GM12878 (cell line): ENCODE measurements at regions of chr20 and their contacts with region 1.

Region 1: GRCh38 chr20:18632196-18633009 is 44.5 kb downstream of the DTD1 start:
- DNase-seq: no peak
- ATAC-seq: peak; percentile 100
- H3K4me3 ChIP-seq: no peak overlapping the region
- H3K27ac ChIP-seq: no peak overlapping the region
- H3K4me1 ChIP-seq: no peaks in the 10 kb centered on the region
- H3K27me3 ChIP-seq: no peaks in the 10 kb centered on the region
- CTCF ChIP-seq: peak; percentile 90 to 98 (median 95)
- EP300 ChIP-seq: no peak
- POLR2A ChIP-seq: no peak
- RAD21 ChIP-seq: peak; percentile 100

Region 2: DNA sequence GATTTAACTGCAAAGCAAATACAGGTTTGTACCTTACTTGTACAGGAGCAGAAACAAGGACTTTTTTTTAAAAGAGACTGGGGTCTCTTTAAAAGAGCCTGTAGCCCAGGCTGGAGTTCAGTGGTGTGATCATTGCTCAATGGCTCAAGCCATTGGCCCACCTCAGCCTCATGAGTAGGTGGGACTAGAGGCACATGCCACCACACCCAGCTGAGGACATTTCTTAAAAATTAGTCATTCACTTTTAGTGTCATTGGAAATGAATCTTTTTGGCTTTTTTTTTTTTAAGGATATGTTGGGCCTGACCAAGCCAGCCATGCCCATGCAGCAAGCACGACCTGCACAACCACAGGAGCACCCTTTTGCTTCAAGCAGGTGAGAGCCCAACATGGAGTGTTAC is 107.8 kb before region 1 on chr20:
- CTCF ChIA-PET with region 1: no interaction called
- POLR2A ChIA-PET with region 1: no interaction called
- RAD21 ChIA-PET with region 1: no interaction called
- SMC1A ChIA-PET with region 1: no interaction called
- in situ Hi-C with region 1: no loop called
- intact Hi-C with region 1: no loop called
- DNase-seq: no peak
- ATAC-seq: no peak
- H3K4me3 ChIP-seq: no peak overlapping the region
- H3K27ac ChIP-seq: no peak overlapping the region
- H3K4me1 ChIP-seq: no peaks in the 10 kb centered on the region
- H3K27me3 ChIP-seq: no peaks in the 10 kb centered on the region
- CTCF ChIP-seq: no peak
- EP300 ChIP-seq: no peak
- POLR2A ChIP-seq: no peak
- RAD21 ChIP-seq: no peak

Region 3: DNA sequence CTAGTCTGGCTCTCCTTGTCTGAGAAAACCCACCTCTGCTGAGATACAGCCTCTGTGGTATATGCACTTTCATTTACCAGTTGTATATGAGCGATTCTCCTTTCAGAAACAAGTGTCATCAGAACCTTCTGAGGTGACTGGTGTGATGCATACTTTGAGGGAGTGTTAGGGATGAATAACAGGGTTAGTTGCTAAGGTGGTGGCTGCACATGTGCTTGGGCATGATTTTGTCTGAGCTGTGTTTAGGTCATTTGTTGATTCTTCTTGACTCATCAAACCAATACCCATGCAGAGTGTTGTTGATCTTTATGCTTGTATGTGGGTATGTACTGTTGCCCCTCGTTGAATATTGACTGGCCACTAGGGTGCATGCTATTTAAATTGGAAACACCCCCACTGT is 18.8 kb before region 1 on chr20:
- CTCF ChIA-PET with region 1: no interaction called
- POLR2A ChIA-PET with region 1: no interaction called
- RAD21 ChIA-PET with region 1: no interaction called
- SMC1A ChIA-PET with region 1: no interaction called
- in situ Hi-C with region 1: no loop called
- intact Hi-C with region 1: no loop called
- DNase-seq: no peak
- ATAC-seq: no peak
- H3K4me3 ChIP-seq: no peak overlapping the region
- H3K27ac ChIP-seq: no peak overlapping the region
- H3K4me1 ChIP-seq: no peaks in the 10 kb centered on the region
- H3K27me3 ChIP-seq: no peaks in the 10 kb centered on the region
- CTCF ChIP-seq: no peak
- EP300 ChIP-seq: no peak
- POLR2A ChIP-seq: no peak
- RAD21 ChIP-seq: no peak

Region 4: GRCh38 chr20:18657575-18657974 is 25.2 kb after region 1 on chr20:
- CTCF ChIA-PET with region 1: interaction called, 11 read pairs
- POLR2A ChIA-PET with region 1: no interaction called
- RAD21 ChIA-PET with region 1: no interaction called
- SMC1A ChIA-PET with region 1: interaction called, 4 read pairs
- in situ Hi-C with region 1: no loop called
- intact Hi-C with region 1: no loop called
- DNase-seq: no peak
- ATAC-seq: no peak
- H3K4me3 ChIP-seq: no peak overlapping the region
- H3K27ac ChIP-seq: no peak overlapping the region
- H3K4me1 ChIP-seq: peaks cover 4% of the 10 kb centered on the region
- H3K27me3 ChIP-seq: no peaks in the 10 kb centered on the region
- CTCF ChIP-seq: no peak
- EP300 ChIP-seq: no peak
- POLR2A ChIP-seq: no peak
- RAD21 ChIP-seq: no peak

Region 5: DNA sequence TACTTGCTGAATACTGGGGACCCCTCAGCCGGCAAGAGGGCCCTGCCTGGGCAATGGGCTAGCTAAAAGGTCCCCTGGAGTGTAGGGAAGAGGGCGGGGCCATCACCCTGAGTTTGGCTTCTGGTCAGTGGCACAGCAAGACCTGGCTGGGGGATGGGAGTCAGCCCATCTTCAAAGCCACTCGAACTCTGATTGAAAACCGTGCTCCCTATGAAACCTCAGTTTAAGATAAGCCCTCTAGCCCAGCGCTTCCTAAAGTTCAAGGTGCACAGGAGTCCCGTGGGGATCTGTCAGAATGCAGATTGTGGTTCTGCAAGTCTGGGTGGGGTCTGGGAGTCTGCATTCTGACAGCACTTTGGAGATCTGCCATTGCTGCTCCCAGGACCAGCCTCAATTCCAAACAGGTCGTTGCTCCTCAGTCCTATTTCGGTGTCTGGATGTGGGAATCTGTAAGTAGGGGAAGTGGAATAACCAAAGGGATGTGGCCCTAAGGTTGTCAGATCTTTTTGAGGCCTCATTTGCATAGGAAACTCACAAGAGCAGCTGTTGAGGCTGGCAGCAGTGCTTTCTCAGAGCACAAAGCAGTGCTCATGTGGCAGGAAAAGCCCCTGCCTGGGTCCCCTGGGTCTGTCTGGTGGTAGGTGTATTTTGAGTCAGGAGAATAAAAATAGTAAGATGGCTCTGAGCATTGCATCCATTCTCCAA is 95.9 kb after region 1 on chr20:
- CTCF ChIA-PET with region 1: interaction called, 11 read pairs
- POLR2A ChIA-PET with region 1: no interaction called
- RAD21 ChIA-PET with region 1: interaction called, 3 read pairs
- SMC1A ChIA-PET with region 1: interaction called, 5 read pairs
- in situ Hi-C with region 1: no loop called
- intact Hi-C with region 1: no loop called
- DNase-seq: peak; percentile 70
- ATAC-seq: peak; percentile 94
- H3K4me3 ChIP-seq: peak overlapping the region; percentile 35; the same call in 1 of the 2 replicates
- H3K27ac ChIP-seq: peak overlapping the region; percentile 47
- H3K4me1 ChIP-seq: peaks cover 22% of the 10 kb centered on the region
- H3K27me3 ChIP-seq: no peaks in the 10 kb centered on the region
- CTCF ChIP-seq: no peak
- EP300 ChIP-seq: peak in 1 of 2 experiments; percentile 69; a peak in 2 of 4 replicates
- POLR2A ChIP-seq: no peak
- RAD21 ChIP-seq: no peak

Region 6: DNA sequence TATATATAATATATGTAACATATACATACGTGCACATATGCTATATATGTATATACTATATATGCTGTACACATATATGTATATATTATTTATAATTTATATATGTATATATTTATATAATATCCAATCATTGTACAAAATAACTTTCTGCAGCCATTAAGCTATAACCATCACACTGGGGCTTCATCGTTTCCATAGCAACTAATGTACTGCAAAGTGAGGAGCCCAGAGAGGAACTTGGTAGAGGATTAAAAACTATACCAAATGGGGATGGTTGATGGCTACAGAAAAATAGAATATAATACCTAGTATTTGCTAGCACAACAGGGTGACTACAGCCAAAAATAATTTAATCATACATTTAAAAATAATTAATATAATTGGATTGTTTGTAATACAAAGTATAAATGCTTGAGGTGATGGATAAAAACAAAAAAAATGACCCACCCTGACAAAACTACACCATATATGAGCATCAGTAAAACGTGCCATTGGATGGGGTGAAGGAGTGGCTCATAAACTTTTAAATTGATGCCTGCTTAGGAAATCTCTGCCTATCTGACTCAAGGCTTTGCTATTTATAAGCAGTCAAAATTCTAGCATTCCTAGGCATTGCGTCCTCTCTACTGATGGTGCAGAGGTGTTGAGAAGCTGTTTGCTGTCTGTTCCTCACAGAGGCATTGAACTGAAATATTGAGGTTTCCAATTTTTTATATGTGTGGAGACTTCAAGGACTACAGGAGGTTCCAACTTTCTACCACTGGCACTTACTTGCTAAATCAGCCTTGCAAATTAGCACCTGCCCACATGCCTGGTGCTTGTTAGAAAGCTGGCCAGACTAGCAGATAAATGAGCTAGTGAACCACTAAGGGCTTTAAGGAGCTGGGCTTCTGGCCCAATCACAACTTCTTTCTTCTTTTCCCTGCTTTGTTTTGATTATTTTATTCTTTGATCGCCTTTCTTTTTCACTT is 371.2 kb after region 1 on chr20:
- CTCF ChIA-PET with region 1: no interaction called
- POLR2A ChIA-PET with region 1: no interaction called
- RAD21 ChIA-PET with region 1: no interaction called
- SMC1A ChIA-PET with region 1: no interaction called
- in situ Hi-C with region 1: no loop called
- intact Hi-C with region 1: no loop called
- DNase-seq: no peak
- ATAC-seq: no peak
- H3K4me3 ChIP-seq: no peak overlapping the region
- H3K27ac ChIP-seq: no peak overlapping the region
- H3K4me1 ChIP-seq: no peaks in the 10 kb centered on the region
- H3K27me3 ChIP-seq: no peaks in the 10 kb centered on the region; a peak in 1 of 4 replicates
- CTCF ChIP-seq: no peak
- EP300 ChIP-seq: no peak
- POLR2A ChIP-seq: no peak
- RAD21 ChIP-seq: no peak

Region 7: GRCh38 chr20:19056909-19057308 is 424.5 kb after region 1 on chr20:
- CTCF ChIA-PET with region 1: interaction called, 13 read pairs
- POLR2A ChIA-PET with region 1: no interaction called
- RAD21 ChIA-PET with region 1: interaction called, 5 read pairs
- SMC1A ChIA-PET with region 1: no interaction called
- in situ Hi-C with region 1: no loop called
- intact Hi-C with region 1: loop called (anchors 5 kb)
- DNase-seq: no peak
- ATAC-seq: no peak
- H3K4me3 ChIP-seq: no peak overlapping the region
- H3K27ac ChIP-seq: no peak overlapping the region
- H3K4me1 ChIP-seq: no peaks in the 10 kb centered on the region
- H3K27me3 ChIP-seq: no peaks in the 10 kb centered on the region
- CTCF ChIP-seq: peak in 2 of 3 experiments; percentile 13 to 31; a peak in 2 of 6 replicates
- EP300 ChIP-seq: no peak
- POLR2A ChIP-seq: no peak
- RAD21 ChIP-seq: 0 out of 2 replicates have a peak, but pooled peaks have one; percentile 25

Region 8: GRCh38 chr20:19185090-19185489 is 552.7 kb after region 1 on chr20:
- CTCF ChIA-PET with region 1: interaction called, 3 read pairs
- POLR2A ChIA-PET with region 1: no interaction called
- RAD21 ChIA-PET with region 1: interaction called, 4 read pairs
- SMC1A ChIA-PET with region 1: interaction called, 4 read pairs
- in situ Hi-C with region 1: loop called (anchors 25 kb)
- intact Hi-C with region 1: loop called (anchors 5 kb)
- DNase-seq: no peak
- ATAC-seq: no peak
- H3K4me3 ChIP-seq: no peak overlapping the region
- H3K27ac ChIP-seq: no peak overlapping the region
- H3K4me1 ChIP-seq: no peaks in the 10 kb centered on the region
- H3K27me3 ChIP-seq: no peaks in the 10 kb centered on the region
- CTCF ChIP-seq: 0 out of 6 replicates have a peak, but pooled peaks of 1 of the 3 experiments have one; percentile 5
- EP300 ChIP-seq: no peak
- POLR2A ChIP-seq: no peak
- RAD21 ChIP-seq: peak; percentile 46; the same call in 1 of the 2 replicates

Region 9: GRCh38 chr20:19249106-19249879 is 616.9 kb after region 1 on chr20:
- CTCF ChIA-PET with region 1: interaction called, 8 read pairs
- POLR2A ChIA-PET with region 1: no interaction called
- RAD21 ChIA-PET with region 1: interaction called, 7 read pairs
- SMC1A ChIA-PET with region 1: interaction called, 8 read pairs
- in situ Hi-C with region 1: no loop called
- intact Hi-C with region 1: loop called (anchors 5 kb)
- DNase-seq: no peak
- ATAC-seq: peak; percentile 63
- H3K4me3 ChIP-seq: no peak overlapping the region
- H3K27ac ChIP-seq: no peak overlapping the region
- H3K4me1 ChIP-seq: no peaks in the 10 kb centered on the region
- H3K27me3 ChIP-seq: 0 out of 4 replicates have a peak, but pooled peaks cover 0 to 2% of the 10 kb centered on the region in 2 experiments
- CTCF ChIP-seq: peak in 2 of 3 experiments; percentile 18 to 28; a peak in 1 of 6 replicates
- EP300 ChIP-seq: no peak
- POLR2A ChIP-seq: no peak
- RAD21 ChIP-seq: 0 out of 2 replicates have a peak, but pooled peaks have one; percentile 12